ENCODE measurements at regions of chr1 and their contacts with region 1.

Region 1: DNA sequence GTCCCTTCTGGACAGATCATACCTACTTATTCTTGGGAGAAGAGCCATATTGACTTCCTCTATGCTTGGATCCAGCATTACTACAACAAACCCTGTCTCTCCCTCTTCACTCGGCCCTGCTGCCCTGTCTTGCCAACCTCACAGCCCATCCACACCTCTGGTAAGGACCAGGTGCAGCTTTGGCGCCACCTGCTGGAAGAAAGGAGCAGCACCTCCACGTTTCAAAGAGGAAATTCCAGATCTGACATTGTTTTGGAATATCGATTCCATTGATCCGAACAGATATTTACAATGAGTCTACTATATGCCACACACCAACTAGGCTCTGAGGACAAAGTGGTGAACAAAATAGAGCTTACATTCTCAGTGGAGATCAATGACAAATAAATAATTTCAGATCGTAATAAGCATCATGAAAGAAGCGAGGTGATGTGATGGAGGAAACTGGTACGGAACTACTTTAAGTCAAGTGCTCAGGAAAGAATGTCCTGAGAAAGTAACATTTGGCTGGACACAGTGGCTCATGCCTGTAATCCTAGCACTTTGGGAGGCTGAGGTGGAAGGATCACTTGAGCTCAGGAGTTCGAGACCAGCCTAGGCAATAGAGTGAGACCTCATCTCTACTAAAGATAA is 18.7 kb downstream of the MFSD2A start:
- DNase-seq: peak; percentile 55
- H3K4me3 Mint-ChIP-seq: no peak overlapping the region
- H3K27ac Mint-ChIP-seq: no peak overlapping the region
- H3K4me1 Mint-ChIP-seq: peaks cover 6% of the 10 kb centered on the region
- H3K27me3 Mint-ChIP-seq: peaks cover 2% of the 10 kb centered on the region

Region 2: GRCh38 chr1:39733161-39733560 is 240.5 kb before region 1 on chr1:
- intact Hi-C with region 1: no loop called
- DNase-seq: no peak
- H3K4me3 Mint-ChIP-seq: no peak overlapping the region
- H3K27ac Mint-ChIP-seq: peak overlapping the region; percentile 48
- H3K4me1 Mint-ChIP-seq: peaks cover 45% of the 10 kb centered on the region
- H3K27me3 Mint-ChIP-seq: peaks cover 9% of the 10 kb centered on the region

Region 3: DNA sequence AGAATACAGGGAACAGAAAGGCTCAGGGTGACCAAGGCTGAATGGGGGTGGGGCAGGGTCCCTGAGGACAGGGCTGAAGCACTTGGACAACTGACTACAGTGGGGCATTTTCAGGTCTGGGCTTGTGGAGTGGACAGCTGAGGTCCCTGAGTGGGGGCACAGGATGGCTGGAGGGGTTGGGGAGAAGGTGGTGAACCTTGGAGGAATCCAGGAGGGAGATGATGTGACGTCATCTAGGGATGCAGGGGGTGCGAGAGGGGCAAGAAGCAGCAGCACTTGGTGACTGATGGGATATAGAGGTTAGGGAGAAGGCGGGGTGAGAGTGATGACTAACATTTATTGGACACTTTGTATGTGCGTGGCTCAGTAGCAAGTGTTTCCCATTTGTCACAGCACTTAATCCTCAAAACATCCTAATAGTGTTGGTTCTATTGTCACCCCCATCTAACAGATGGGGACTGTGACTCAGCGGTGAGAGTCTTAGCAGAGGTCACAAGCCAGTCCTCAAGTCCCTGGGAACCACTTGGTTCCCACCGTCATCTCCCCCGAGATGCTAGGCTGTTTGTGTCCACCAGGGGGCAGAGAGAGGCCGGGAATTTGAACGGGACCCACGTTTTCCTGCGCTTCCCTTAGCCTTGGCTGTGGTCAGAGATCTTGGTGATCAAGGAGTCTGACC is 157.1 kb before region 1 on chr1:
- intact Hi-C with region 1: loop called (anchors 1 kb)
- DNase-seq: peak; percentile 56
- H3K4me3 Mint-ChIP-seq: peak overlapping the region; percentile 37
- H3K27ac Mint-ChIP-seq: no peak overlapping the region
- H3K4me1 Mint-ChIP-seq: peaks cover 15% of the 10 kb centered on the region
- H3K27me3 Mint-ChIP-seq: peaks cover 20% of the 10 kb centered on the region

Region 4: DNA sequence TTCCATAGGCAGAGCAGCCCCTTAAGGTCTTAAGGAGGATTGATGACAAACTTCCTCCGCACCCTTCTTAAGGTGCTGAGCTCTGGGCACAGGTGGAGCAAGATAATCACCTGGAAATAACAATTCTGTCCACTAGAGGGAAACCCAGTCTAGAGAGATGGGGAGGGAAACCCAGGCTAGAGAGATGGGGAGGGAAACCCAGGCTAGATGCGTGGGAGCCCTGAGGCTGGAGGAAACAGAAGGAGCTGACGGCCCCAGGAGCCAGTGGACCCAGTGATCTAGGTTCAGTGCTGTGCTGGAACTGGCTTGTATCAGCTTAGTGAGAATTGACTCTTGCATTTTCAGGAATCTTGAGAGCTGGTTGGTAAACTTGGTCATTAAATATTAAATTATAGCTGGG is 54.1 kb before region 1 on chr1:
- intact Hi-C with region 1: loop called (anchors 1 kb)
- DNase-seq: peak; percentile 32
- H3K4me3 Mint-ChIP-seq: no peak overlapping the region
- H3K27ac Mint-ChIP-seq: no peak overlapping the region
- H3K4me1 Mint-ChIP-seq: no peaks in the 10 kb centered on the region
- H3K27me3 Mint-ChIP-seq: peaks cover 9% of the 10 kb centered on the region

Region 5: DNA sequence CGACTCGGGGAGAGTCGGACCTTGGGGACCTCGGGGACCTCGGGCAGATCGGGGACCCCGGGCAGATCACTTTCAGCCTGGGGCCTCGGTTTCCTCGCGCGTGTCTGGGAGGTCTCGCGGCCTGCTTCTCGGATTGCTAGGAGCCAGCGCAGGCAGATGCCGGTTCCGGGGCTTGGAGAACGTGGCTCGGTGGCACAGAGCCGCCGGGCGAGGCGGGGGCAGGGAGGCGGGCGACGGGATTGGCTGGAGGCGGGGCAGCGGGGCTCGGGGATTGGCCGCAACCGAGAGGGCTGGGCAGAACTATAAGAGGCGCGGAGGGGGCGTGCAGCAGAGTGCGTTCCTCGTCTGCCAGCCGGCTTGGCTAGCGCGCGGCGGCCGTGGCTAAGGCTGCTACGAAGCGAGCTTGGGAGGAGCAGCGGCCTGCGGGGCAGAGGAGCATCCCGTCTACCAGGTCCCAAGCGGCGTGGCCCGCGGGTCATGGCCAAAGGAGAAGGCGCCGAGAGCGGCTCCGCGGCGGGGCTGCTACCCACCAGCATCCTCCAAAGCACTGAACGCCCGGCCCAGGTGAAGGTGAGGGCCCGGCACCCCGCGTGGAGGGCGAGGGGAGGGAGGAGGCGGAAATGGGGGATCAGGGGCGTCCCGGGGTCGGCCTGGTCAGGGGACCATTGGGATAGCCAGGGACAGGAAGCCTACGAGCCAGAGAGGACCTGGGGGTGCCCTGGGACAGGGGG is 18.6 kb before region 1 on chr1 and contains the start of gene MFSD2A:
- intact Hi-C with region 1: loop called (anchors 2 kb)
- DNase-seq: peak; percentile 80
- H3K4me3 Mint-ChIP-seq: peak within 1 kb of the TSS; percentile 98
- H3K27ac Mint-ChIP-seq: peak within 1 kb of the TSS; percentile 94
- H3K4me1 Mint-ChIP-seq: peaks cover 49% of the 10 kb centered on the region
- H3K27me3 Mint-ChIP-seq: no peaks in the 10 kb centered on the region
- total RNA-seq, gene MFSD2A: 55.3 and 56.2 TPM in 2 replicates

Region 6: GRCh38 chr1:40094466-40095110 is 121.0 kb after region 1 on chr1:
- intact Hi-C with region 1: no loop called
- DNase-seq: no peak
- H3K4me3 Mint-ChIP-seq: no peak overlapping the region
- H3K27ac Mint-ChIP-seq: no peak overlapping the region
- H3K4me1 Mint-ChIP-seq: peaks cover 42% of the 10 kb centered on the region
- H3K27me3 Mint-ChIP-seq: peaks cover 2% of the 10 kb centered on the region